Posterior cingulate gyrus (tissue), 11 donors: ENCODE measurements at regions of chr12 and their contacts with region 1.

Region 1: DNA sequence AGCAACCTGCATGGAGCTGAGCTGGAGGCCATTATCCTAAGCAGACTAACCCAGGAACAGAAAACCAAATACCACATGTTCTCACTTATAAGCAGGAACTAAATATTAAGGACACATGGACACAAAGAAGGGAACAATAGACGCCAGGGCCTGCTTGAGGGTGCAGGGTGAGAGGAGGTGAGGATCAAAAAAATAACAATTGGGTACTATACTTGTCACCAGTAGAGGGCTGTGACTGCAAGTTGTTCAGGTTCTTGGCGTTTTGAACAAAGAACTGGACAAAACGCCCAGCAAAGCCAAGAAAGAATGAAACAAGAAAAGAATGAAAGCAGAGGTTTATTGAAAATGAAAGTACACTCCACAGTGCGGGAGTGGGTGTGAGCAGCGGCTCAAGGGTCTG is 208.5 kb upstream of the NEDD1 start:
- DNase-seq: no peak

Region 2: GRCh38 chr12:96766232-96766631 is 67.7 kb after region 1 on chr12:
- intact Hi-C with region 1: loop called (anchors 2 kb)
- DNase-seq: no peak

Region 3: GRCh38 chr12:97701899-97702298 is 1003.4 kb after region 1 on chr12:
- intact Hi-C with region 1: no loop called
- DNase-seq: no peak